ENCODE measurements at regions of chr12 and their contacts with region 1.

Region 1: DNA sequence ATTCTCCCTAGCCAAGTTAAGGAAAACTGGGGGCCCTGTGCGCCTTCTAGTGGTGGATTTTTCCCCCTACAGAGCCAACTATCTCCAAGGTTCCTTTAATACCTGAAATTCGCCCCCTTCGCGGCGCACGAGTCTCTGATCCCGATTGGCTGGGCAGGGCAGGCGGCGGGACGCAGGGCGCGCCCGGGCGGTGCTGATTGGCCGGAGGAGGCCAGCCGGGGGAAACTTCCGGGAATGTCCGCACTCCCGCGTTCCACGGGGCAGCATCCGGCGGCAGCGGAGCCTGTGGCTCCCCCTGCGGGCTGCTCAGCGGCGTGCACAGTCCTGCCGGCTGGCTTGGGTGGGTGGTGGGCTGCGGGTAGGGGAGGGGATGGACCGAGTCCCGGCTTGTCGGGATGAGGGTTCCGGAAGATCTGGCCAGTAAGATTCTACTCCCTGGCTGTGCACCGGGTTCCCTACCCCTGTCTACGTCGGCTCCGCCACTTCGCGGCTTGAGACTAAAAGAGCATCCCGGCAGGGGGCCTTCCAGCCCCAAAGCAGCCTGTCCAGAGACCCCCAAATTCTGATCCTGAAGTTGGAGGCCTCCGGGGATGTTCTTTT is at the start of gene NABP2:
- DNase-seq: peak; percentile 77 to 94 (median 86)
- ATAC-seq: peak; percentile 75 to 79
- H3K4me3 Mint-ChIP-seq: peak within 1 kb of the TSS; percentile 83 to 100 (median 97)
- H3K27ac Mint-ChIP-seq: peak within 1 kb of the TSS; percentile 71 to 100 (median 98)
- H3K4me1 Mint-ChIP-seq: peaks cover 27 to 53% (median 47%) of the 10 kb centered on the region in 4 donors
- H3K27me3 Mint-ChIP-seq: no peaks in the 10 kb centered on the region
- polyA plus RNA-seq, gene NABP2: 3.5 to 3.9 (median 3.7) TPM

Region 2: DNA sequence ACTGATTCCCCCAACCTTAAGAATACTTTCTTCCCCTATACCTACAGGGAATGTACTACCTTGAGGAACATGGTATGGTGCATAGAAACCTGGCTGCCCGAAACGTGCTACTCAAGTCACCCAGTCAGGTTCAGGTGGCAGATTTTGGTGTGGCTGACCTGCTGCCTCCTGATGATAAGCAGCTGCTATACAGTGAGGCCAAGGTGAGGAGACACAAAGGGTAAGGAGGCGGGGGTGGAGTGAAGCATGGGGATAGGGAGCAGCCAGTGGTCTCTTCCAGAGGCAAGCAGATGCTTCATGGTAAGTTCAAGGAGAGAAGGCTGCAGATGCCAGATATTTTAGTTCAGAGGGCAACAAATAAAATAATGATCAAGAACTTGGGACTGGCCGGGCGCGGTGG is 126.5 kb before region 1 on chr12:
- POLR2A ChIA-PET with region 1: no interaction called
- DNase-seq: no peak
- ATAC-seq: no peak
- H3K4me3 Mint-ChIP-seq: no peak overlapping the region
- H3K27ac Mint-ChIP-seq: peak overlapping the region in 4 of 10 donors; percentile 17 to 74 (median 24)
- H3K4me1 Mint-ChIP-seq: peaks cover 18 to 34% (median 25%) of the 10 kb centered on the region in 4 donors
- H3K27me3 Mint-ChIP-seq: peaks cover 0 to 4% (median 0%) of the 10 kb centered on the region in 5 donors

Region 3: GRCh38 chr12:56127888-56128669 is 96.1 kb before region 1 on chr12 and contains the start of gene ESYT1:
- POLR2A ChIA-PET with region 1: interaction called, 21 read pairs
- DNase-seq: peak; percentile 86 to 100 (median 98)
- ATAC-seq: peak; percentile 83 to 90
- H3K4me3 Mint-ChIP-seq: peak within 1 kb of the TSS; percentile 97 to 100 (median 99)
- H3K27ac Mint-ChIP-seq: peak within 1 kb of the TSS; percentile 90 to 99 (median 96)
- H3K4me1 Mint-ChIP-seq: peaks cover 32 to 78% (median 60%) of the 10 kb centered on the region in 4 donors
- H3K27me3 Mint-ChIP-seq: no peaks in the 10 kb centered on the region
- polyA plus RNA-seq, gene ESYT1: 354 to 433 (median 357) TPM

Region 4: DNA sequence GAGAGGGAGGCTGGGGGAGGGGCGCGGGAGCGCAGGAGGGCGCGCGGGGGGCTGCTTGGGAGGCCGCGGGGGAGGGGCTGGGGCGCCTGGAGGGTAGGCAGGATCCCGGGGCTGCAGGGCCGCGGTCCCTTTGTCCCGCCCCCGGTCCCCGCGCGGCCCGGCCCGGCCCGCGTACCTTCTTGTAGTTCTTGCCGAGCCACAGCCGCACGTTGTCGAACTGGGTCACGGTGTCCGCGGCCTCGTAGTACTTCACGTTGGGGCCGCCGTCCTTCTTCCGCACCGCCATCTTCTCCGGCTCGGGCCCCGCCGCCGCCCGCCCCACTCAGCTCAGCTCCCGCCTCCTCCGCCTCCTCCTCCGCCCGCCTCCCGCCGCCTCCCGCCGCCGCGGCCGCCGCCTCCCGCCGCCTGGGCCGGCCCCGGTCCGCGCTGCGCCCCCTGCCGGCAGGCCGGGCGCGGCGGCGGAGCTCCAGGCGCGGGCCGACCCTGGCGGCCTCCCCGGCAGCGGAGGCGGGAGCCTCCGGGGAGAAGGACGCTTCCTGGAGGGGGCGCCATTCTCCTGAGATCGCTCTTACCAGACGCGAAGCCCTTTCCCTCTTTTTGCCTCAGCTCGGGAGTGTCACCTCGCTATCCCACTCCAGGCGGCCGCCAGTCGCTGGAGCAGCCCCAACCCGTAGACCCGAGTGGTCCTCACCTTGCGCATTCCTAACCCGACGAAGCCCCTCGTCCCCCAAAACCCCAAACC is 34.9 kb before region 1 on chr12 and contains the start of gene SMARCC2:
- POLR2A ChIA-PET with region 1: interaction called, 88 read pairs
- DNase-seq: peak; percentile 74 to 91 (median 82)
- ATAC-seq: peak; percentile 82 to 84
- H3K4me3 Mint-ChIP-seq: peak within 1 kb of the TSS; percentile 89 to 99 (median 96)
- H3K27ac Mint-ChIP-seq: peak within 1 kb of the TSS; percentile 97 to 100 (median 98)
- H3K4me1 Mint-ChIP-seq: peaks cover 39 to 51% (median 43%) of the 10 kb centered on the region in 4 donors
- H3K27me3 Mint-ChIP-seq: peaks cover 0 to 3% (median 0%) of the 10 kb centered on the region in 5 donors
- polyA plus RNA-seq, gene SMARCC2: 46.3 to 70.4 (median 54.1) TPM

Region 5: GRCh38 chr12:56234746-56235436 is 10.7 kb after region 1 on chr12:
- POLR2A ChIA-PET with region 1: interaction called, 10 read pairs
- DNase-seq: no peak
- ATAC-seq: no peak
- H3K4me3 Mint-ChIP-seq: no peak overlapping the region
- H3K27ac Mint-ChIP-seq: peak overlapping the region in 2 of 10 donors; percentile 51 to 65
- H3K4me1 Mint-ChIP-seq: peaks cover 0 to 2% (median under 1%) of the 10 kb centered on the region in 4 donors
- H3K27me3 Mint-ChIP-seq: no peaks in the 10 kb centered on the region

Region 6: GRCh38 chr12:56266693-56267442 is 42.7 kb after region 1 on chr12 and contains the start of gene COQ10A:
- POLR2A ChIA-PET with region 1: interaction called, 19 read pairs
- DNase-seq: peak; percentile 81 to 95 (median 90)
- ATAC-seq: peak; percentile 86 to 88
- H3K4me3 Mint-ChIP-seq: peak within 1 kb of the TSS; percentile 85 to 97 (median 94)
- H3K27ac Mint-ChIP-seq: peak within 1 kb of the TSS; percentile 93 to 99 (median 98)
- H3K4me1 Mint-ChIP-seq: peaks cover 8 to 20% (median 20%) of the 10 kb centered on the region in 4 donors
- H3K27me3 Mint-ChIP-seq: no peaks in the 10 kb centered on the region
- polyA plus RNA-seq, gene COQ10A: 7.4 to 15.7 (median 9.6) TPM

Region 7: DNA sequence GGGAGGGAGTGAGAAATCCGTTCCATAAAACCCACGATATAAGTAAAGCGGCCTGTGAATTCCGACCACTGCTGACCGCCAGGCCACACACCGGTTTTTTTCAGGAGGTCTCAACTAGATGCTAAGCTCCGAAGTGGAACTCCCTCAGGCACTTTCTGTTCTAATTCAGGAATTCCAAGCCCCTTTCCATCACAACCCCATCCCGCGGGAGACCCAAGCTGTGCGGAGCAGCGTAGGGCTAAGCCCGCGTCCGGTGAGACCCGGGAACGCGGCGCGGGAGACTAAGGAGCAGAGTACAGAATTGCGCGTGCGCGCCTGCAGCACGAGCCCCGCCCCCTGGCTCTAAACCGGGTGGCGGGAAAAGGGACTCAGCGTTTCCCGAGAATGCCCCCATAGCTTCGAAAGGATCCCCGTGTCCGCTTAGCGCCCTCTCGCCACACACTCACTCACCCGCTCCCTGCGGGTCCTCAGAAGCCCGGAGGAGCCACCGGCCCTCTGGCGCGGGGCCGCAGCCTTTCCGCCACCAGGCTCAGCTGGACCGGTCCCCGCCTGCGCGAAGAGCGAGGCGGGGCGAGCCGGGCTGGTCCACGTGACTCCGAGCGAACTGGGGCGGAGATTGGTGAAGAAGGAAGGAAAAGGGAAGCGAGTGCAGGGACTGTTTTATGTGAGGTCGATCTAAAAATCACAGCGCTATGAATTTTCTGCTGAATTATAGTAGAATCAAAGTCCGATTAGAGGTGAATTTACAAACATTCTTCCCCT is 224.8 kb after region 1 on chr12 and contains the start of gene TIMELESS:
- POLR2A ChIA-PET with region 1: interaction called, 11 read pairs
- DNase-seq: peak; percentile 72 to 95 (median 80)
- ATAC-seq: peak; percentile 97 to 98
- H3K4me3 Mint-ChIP-seq: peak within 1 kb of the TSS; percentile 88 to 95 (median 92)
- H3K27ac Mint-ChIP-seq: peak within 1 kb of the TSS; percentile 93 to 97 (median 95)
- H3K4me1 Mint-ChIP-seq: peaks cover 12 to 28% (median 14%) of the 10 kb centered on the region in 4 donors
- H3K27me3 Mint-ChIP-seq: no peaks in the 10 kb centered on the region
- polyA plus RNA-seq, gene TIMELESS: 3.3 to 4.2 (median 3.5) TPM